ENCODE measurements at regions of chr5 and their contacts with region 1.

Region 1: DNA sequence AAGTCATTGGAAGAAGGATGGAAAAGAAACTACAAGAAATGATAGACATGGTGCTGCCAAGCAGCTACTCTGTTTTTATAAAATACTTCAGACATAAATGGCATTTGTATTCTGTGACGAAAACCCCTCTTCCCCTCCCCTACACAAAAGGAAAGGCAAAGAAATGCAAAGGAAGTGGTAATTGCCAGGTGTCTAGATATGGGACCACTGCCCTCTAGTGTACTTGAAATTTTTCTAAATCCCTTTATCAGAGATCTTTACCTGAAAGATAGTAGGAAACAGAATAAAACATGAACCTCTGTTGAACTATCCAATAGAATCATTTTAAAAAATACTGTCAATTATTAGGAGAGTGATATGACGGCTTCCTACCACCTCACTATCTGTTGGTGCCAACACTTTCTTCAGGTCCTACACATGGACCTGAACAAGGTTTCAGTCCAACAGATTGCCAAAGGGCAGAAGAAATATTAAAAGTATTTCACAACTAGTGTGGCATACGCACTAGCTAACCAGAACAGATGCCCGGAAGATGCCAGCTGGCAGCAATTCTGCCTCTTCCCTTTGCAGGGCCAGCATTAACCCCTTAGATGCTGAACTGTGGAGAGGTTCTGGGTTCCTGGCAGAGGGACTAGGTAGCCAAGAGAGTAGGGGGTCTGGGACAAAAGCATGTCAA is 104.1 kb downstream of the TSSK1B start:
- DNase-seq: peak; percentile 74
- ATAC-seq: peak; percentile 82
- H3K4me3 ChIP-seq: no peak overlapping the region
- H3K27ac ChIP-seq: no peak overlapping the region
- H3K4me1 ChIP-seq: peaks cover 6% of the 10 kb centered on the region
- H3K27me3 ChIP-seq: no peaks in the 10 kb centered on the region
- CTCF ChIP-seq: peak; percentile 83

Region 2: GRCh38 chr5:112995764-112996618 is 334.7 kb before region 1 on chr5:
- CTCF ChIA-PET with region 1: interaction called, 4 read pairs
- POLR2A ChIA-PET with region 1: no interaction called
- intact Hi-C with region 1: loop called (anchors 1 kb)
- DNase-seq: peak; percentile 90
- ATAC-seq: peak; percentile 78
- H3K4me3 ChIP-seq: no peak overlapping the region
- H3K27ac ChIP-seq: no peak overlapping the region
- H3K4me1 ChIP-seq: peaks cover 11% of the 10 kb centered on the region
- H3K27me3 ChIP-seq: no peaks in the 10 kb centered on the region
- CTCF ChIP-seq: peak; percentile 97

Region 3: DNA sequence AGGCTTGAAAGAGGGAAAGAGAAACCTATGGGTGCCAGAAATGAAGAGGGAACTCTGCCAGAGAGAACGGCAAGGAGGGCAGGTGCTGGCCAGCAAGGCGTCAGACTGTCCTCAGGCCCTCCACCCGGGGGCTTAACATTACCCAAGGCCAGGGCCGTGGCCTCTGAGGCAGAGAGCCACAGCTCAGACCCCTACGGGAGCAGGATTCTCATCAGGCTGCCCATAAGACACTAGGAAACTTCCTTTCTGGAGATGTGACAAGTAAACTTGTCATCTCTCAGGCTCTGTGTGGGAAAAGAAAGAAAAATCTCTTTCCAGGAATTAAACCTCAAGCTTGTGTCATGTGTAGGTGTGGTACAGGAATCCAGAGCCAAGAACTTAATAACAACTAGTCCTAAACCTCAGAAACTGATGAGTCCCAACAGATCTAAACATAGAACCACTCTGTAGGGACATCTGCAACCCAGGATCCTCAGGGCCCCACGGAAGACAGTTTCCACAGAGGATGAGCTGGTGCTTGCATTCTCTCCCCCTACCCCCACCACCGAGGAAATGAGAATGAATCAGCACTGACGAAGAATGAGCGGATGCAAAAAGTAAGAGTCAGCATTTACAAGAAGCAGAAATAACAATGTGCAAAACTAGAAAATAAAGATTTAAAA is 279.8 kb before region 1 on chr5:
- CTCF ChIA-PET with region 1: no interaction called
- POLR2A ChIA-PET with region 1: no interaction called
- intact Hi-C with region 1: loop called (anchors 5 kb)
- DNase-seq: peak; percentile 73
- ATAC-seq: peak; percentile 78
- H3K4me3 ChIP-seq: no peak overlapping the region
- H3K27ac ChIP-seq: peak overlapping the region; percentile 77
- H3K4me1 ChIP-seq: peaks cover 44% of the 10 kb centered on the region
- H3K27me3 ChIP-seq: no peaks in the 10 kb centered on the region
- CTCF ChIP-seq: no peak

Region 4: GRCh38 chr5:113166852-113167366 is 163.8 kb before region 1 on chr5:
- CTCF ChIA-PET with region 1: no interaction called
- POLR2A ChIA-PET with region 1: interaction called, 3 read pairs
- intact Hi-C with region 1: loop called (anchors 1 kb)
- DNase-seq: peak; percentile 91
- ATAC-seq: peak; percentile 94
- H3K4me3 ChIP-seq: peak overlapping the region; percentile 43
- H3K27ac ChIP-seq: peak overlapping the region; percentile 61
- H3K4me1 ChIP-seq: peaks cover 28% of the 10 kb centered on the region
- H3K27me3 ChIP-seq: peaks cover 9% of the 10 kb centered on the region; the same call in 1 of the 2 replicates
- CTCF ChIP-seq: no peak

Region 5: DNA sequence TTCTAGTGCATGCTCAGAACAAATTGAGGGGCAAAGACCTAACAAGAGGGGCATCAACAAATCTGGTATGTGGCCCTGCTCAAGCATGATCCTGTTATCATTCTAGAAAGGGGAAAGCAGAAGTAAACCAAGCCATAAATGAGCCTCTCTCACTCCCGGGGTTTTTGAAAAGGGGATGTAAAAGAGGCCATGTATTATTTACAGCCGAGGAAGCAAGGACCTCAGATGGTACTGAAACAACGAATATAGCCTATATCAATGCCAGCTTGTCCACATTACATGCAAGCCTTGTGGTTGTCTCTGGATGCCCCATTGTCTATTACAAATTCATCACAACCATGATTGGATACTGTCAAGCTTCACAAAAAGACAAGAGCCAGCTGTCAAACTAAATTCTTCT is 142.8 kb before region 1 on chr5:
- CTCF ChIA-PET with region 1: no interaction called
- POLR2A ChIA-PET with region 1: no interaction called
- intact Hi-C with region 1: no loop called
- DNase-seq: no peak
- ATAC-seq: no peak
- H3K4me3 ChIP-seq: no peak overlapping the region
- H3K27ac ChIP-seq: no peak overlapping the region
- H3K4me1 ChIP-seq: peaks cover 12% of the 10 kb centered on the region
- H3K27me3 ChIP-seq: peaks cover 5% of the 10 kb centered on the region; the same call in 1 of the 2 replicates
- CTCF ChIP-seq: no peak

Region 6: DNA sequence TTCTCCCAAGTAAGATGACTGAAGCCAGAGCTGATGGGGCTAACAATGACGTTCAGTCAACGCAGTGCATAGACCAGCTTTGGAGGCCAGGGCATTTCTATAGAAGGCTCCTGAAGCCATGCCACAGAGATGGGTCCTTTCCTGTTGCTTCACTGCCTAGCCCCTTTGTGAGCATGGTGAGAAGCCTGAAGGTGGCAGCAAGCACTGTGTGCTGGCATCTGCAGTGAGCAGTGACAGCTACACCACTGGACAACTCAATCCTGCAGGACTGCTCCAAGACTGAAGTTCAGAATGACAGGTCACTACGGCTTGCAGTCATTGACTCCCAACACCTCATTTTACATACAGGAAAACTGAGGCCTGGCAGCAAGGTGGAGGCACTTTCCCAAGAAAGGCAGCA is 124.9 kb before region 1 on chr5:
- CTCF ChIA-PET with region 1: no interaction called
- POLR2A ChIA-PET with region 1: no interaction called
- intact Hi-C with region 1: loop called (anchors 1 kb)
- DNase-seq: peak; percentile 29
- ATAC-seq: peak; percentile 88
- H3K4me3 ChIP-seq: no peak overlapping the region
- H3K27ac ChIP-seq: no peak overlapping the region
- H3K4me1 ChIP-seq: no peaks in the 10 kb centered on the region
- H3K27me3 ChIP-seq: peaks cover 8% of the 10 kb centered on the region; the same call in 1 of the 2 replicates
- CTCF ChIP-seq: peak; percentile 45

Region 7: GRCh38 chr5:113294311-113295110 is 36.2 kb before region 1 on chr5:
- CTCF ChIA-PET with region 1: no interaction called
- POLR2A ChIA-PET with region 1: no interaction called
- intact Hi-C with region 1: loop called (anchors 2 kb)
- DNase-seq: peak; percentile 73
- ATAC-seq: peak; percentile 90
- H3K4me3 ChIP-seq: peak overlapping the region; percentile 73
- H3K27ac ChIP-seq: no peak overlapping the region
- H3K4me1 ChIP-seq: peaks cover 7% of the 10 kb centered on the region; the same call in 1 of the 2 replicates
- H3K27me3 ChIP-seq: no peaks in the 10 kb centered on the region
- CTCF ChIP-seq: peak; percentile 40; the same call in 1 of the 2 replicates

Region 8: DNA sequence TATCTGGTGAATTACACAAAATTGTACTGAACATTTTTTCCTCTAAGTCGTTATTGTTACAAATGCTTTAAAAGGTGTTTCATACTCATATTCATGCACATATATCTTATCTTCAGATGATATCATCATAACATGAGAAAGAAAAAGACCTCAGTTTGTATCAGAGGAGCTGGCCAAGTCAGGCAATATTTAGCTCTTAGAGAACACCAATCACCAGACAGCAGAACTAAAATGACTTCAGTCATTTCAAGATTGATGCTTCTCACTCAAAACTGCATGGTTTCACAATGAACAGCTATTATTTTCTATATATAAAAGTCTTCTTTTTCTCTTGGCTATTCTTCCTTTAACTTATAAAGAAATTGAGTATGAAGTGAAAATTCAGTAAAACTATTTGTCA is 59.6 kb after region 1 on chr5:
- CTCF ChIA-PET with region 1: interaction called, 10 read pairs
- POLR2A ChIA-PET with region 1: no interaction called
- intact Hi-C with region 1: no loop called
- DNase-seq: no peak
- ATAC-seq: no peak
- H3K4me3 ChIP-seq: no peak overlapping the region
- H3K27ac ChIP-seq: no peak overlapping the region
- H3K4me1 ChIP-seq: no peaks in the 10 kb centered on the region
- H3K27me3 ChIP-seq: peaks cover 9% of the 10 kb centered on the region; the same call in 1 of the 2 replicates
- CTCF ChIP-seq: no peak

Region 9: GRCh38 chr5:113487781-113488644 is 157.3 kb after region 1 on chr5 and contains the start of gene MCC:
- CTCF ChIA-PET with region 1: no interaction called
- POLR2A ChIA-PET with region 1: no interaction called
- intact Hi-C with region 1: no loop called
- DNase-seq: peak; percentile 76
- ATAC-seq: peak; percentile 62
- H3K4me3 ChIP-seq: peak within 1 kb of the TSS; percentile 87
- H3K27ac ChIP-seq: no peak within 1 kb of the TSS
- H3K4me1 ChIP-seq: peaks cover 13% of the 10 kb centered on the region
- H3K27me3 ChIP-seq: peaks cover 16% of the 10 kb centered on the region; the same call in 1 of the 2 replicates
- CTCF ChIP-seq: no peak
- total RNA-seq, gene MCC: 7.1 and 10.3 TPM in 2 replicates